ENCODE measurements at regions of chr20 and their contacts with region 1.

Region 1: GRCh38 chr20:25574425-25574824 is 10.9 kb downstream of the NINL start:
- DNase-seq: no peak
- H3K4me3 ChIP-seq: no peak overlapping the region
- H3K27ac ChIP-seq: no peak overlapping the region
- H3K4me1 ChIP-seq: peaks cover 0 to 6% (median 4%) of the 10 kb centered on the region in 4 experiments; a peak in 4 of 7 replicates
- H3K27me3 ChIP-seq: no peaks in the 10 kb centered on the region
- CTCF ChIP-seq: peak; percentile 28 to 55 (median 28); a peak in 3 of 4 replicates
- EP300 ChIP-seq: no peak
- POLR2A ChIP-seq: no peak
- RAD21 ChIP-seq: peak; percentile 59 to 66

Region 2: DNA sequence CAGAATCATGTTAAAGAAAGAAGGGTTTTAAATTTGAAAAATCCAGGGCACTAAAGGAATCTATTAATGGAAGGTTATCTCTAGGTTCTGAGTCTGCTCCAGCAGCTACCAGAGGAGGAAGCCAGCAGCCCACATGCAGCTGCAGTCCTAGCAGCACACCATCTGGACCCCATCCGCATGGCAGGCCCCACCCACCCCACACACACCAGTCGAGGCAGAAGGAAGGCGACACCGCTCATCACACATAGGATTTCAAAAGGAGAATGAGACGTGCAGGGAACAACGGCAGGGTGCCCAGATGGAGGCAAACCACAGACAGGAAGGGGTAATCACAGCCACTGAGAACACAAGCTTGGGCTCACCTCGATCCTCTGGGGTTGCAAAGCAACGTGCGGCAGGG is 88.0 kb before region 1 on chr20:
- CTCF ChIA-PET with region 1: no interaction called
- POLR2A ChIA-PET with region 1: no interaction called
- DNase-seq: no peak
- H3K4me3 ChIP-seq: no peak overlapping the region
- H3K27ac ChIP-seq: no peak overlapping the region
- H3K4me1 ChIP-seq: peaks cover 0 to 19% (median 11%) of the 10 kb centered on the region in 4 experiments; a peak in 6 of 7 replicates
- H3K27me3 ChIP-seq: no peaks in the 10 kb centered on the region
- CTCF ChIP-seq: no peak
- EP300 ChIP-seq: no peak
- POLR2A ChIP-seq: no peak
- RAD21 ChIP-seq: no peak

Region 3: GRCh38 chr20:25584905-25585704 is 10.7 kb after region 1 on chr20 and contains the start of gene NINL:
- CTCF ChIA-PET with region 1: no interaction called
- POLR2A ChIA-PET with region 1: interaction called, 19 read pairs
- DNase-seq: peak; percentile 47 to 89
- H3K4me3 ChIP-seq: peak within 1 kb of the TSS; percentile 72 to 85 (median 74)
- H3K27ac ChIP-seq: peak within 1 kb of the TSS; percentile 88
- H3K4me1 ChIP-seq: 0 out of 7 replicates have a peak, but pooled peaks cover 0 to 2% (median 0%) of the 10 kb centered on the region in 4 experiments
- H3K27me3 ChIP-seq: no peaks in the 10 kb centered on the region
- CTCF ChIP-seq: no peak
- EP300 ChIP-seq: no peak
- POLR2A ChIP-seq: peak; percentile 89 to 96
- RAD21 ChIP-seq: no peak
- total RNA-seq, gene NINL: 27.3 and 30.0 TPM in 2 replicates